Aorta (tissue), 5 donors: ENCODE measurements at regions of chr17 and their contacts with region 1.

Region 1: GRCh38 chr17:64938925-64939474 is 19.7 kb upstream of the LRRC37A3 start:
- DNase-seq: peak in 1 of 2 donors; percentile 78
- ATAC-seq: peak; percentile 60
- H3K4me3 ChIP-seq: no peak overlapping the region
- H3K27ac ChIP-seq: no peak overlapping the region
- H3K4me1 ChIP-seq: no peaks in the 10 kb centered on the region
- H3K27me3 ChIP-seq: no peaks in the 10 kb centered on the region

Region 2: DNA sequence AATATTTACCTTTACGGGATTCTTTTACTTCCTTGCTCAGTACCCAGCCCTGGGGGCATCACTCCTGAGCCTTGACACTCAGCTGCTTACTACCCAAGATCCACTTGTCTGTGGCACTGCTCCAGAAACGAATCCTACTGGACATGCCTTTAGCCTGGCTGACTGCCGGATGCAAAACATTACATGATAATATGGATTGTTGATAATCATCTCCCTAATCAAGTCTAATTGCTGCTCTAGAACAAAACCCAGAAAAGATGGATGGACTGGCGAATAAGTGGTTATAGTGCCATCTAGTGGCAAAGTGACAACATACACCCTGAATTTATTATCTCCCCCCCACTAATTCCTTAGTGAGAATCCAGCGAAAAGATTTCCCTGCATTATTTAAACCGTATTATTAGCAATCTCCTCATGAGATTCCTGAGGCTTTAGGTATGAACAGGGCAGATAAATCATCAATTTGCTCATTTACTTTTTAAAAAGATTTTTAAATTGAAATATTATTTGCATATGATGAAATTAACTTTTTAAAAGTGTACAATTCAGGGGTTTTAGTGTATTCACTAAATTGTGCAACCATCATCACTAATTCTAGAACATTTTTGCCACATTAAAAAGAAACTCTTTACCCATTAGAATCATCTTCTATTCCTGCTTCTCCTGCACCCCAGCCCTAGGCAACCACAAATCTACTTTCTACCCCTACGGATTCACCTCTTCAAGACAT is 259.8 kb after region 1 on chr17:
- intact Hi-C with region 1: loop called in 1 of 2 experiments (anchors 5 kb)
- DNase-seq: no peak
- ATAC-seq: peak; percentile 71
- H3K4me3 ChIP-seq: no peak overlapping the region
- H3K27ac ChIP-seq: no peak overlapping the region
- H3K4me1 ChIP-seq: no peaks in the 10 kb centered on the region
- H3K27me3 ChIP-seq: no peaks in the 10 kb centered on the region